A549 (cell line): ENCODE measurements at regions of chr9 and their contacts with region 1.

Region 1: DNA sequence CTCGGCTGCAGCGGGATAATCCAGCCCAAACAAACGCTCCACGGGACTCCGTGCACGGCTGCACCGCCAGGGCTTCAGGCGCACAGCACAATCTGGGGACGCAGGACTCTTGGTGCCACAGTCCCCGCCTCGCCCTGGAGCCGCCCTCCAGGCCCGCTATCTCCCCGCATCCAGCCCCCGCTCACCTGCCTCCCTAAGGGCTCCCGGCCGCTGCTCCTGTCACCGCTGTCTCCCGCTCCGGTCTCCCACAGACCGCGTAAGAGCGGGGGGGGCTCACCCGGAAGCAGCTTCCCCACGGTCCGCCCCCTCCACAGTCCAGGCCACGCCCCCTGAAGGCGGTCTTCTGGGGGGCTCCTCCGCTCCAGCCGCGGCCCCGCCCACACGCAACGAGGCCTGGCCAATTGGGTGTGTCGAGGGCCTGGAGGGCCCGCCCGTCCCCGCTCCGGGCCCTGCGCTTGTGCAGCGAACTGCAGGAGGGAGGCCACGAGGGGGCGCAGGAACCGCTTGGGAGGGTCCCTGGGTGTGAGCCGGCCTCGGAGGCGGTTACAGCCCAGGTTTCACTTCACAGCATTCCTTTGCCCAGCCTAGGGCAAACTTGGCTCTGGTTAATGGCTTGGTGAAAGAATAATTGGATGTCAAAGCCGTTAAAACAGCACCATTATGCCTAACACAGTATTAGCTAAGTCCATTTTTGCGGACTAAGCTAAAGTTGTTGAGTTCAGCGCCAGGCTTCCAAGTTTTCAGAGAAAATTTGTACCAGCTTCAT is at the start of gene ALAD:
- DNase-seq: peak; percentile 93 to 98
- ATAC-seq: peak; percentile 97 to 98
- H3K4me3 ChIP-seq: peak within 1 kb of the TSS; percentile 73
- H3K27ac ChIP-seq: peak within 1 kb of the TSS; percentile 66 to 85
- H3K4me1 ChIP-seq: peaks cover 10% of the 10 kb centered on the region; the same call in 1 of the 3 replicates
- CTCF ChIP-seq: peak; percentile 85
- EP300 ChIP-seq: no peak
- POLR2A ChIP-seq: peak; percentile 60
- RAD21 ChIP-seq: peak; percentile 49 to 66
- polyA plus RNA-seq, gene ALAD: 5.7 and 9.5 TPM in 2 replicates

Region 2: GRCh38 chr9:112867416-112867991 is 533.7 kb before region 1 on chr9:
- CTCF ChIA-PET with region 1: no interaction called
- POLR2A ChIA-PET with region 1: no interaction called
- DNase-seq: peak; percentile 41 to 80
- ATAC-seq: peak; percentile 57 to 86; a peak in 4 of 6 replicates
- H3K4me3 ChIP-seq: no peak overlapping the region
- H3K27ac ChIP-seq: peak overlapping the region; percentile 3 to 64; a peak in 2 of 6 replicates
- H3K4me1 ChIP-seq: no peaks in the 10 kb centered on the region
- CTCF ChIP-seq: no peak
- EP300 ChIP-seq: no peak
- POLR2A ChIP-seq: no peak
- RAD21 ChIP-seq: no peak

Region 3: DNA sequence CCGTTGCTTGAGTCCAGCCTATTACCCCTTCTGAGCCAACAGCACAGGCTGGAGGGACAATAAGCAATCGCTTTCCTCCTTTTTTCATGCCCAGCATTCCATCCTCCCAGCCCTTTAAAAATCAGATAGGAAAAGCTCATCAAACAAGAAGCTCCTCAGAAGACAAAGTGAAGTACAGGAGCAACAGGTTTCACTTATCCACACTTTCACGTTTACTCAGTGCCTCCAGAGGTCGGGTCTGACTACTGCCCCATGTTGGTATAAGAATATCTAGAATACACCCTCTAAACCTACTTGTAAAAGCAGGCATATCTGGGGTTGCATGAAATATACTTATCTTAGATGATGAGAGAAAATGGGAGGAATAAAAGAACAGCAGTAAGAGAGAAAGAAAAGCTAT is 204.2 kb before region 1 on chr9:
- CTCF ChIA-PET with region 1: no interaction called
- POLR2A ChIA-PET with region 1: no interaction called
- DNase-seq: no peak
- ATAC-seq: no peak
- H3K4me3 ChIP-seq: no peak overlapping the region
- H3K27ac ChIP-seq: no peak overlapping the region
- H3K4me1 ChIP-seq: no peaks in the 10 kb centered on the region
- CTCF ChIP-seq: no peak
- EP300 ChIP-seq: no peak
- POLR2A ChIP-seq: no peak
- RAD21 ChIP-seq: no peak

Region 4: DNA sequence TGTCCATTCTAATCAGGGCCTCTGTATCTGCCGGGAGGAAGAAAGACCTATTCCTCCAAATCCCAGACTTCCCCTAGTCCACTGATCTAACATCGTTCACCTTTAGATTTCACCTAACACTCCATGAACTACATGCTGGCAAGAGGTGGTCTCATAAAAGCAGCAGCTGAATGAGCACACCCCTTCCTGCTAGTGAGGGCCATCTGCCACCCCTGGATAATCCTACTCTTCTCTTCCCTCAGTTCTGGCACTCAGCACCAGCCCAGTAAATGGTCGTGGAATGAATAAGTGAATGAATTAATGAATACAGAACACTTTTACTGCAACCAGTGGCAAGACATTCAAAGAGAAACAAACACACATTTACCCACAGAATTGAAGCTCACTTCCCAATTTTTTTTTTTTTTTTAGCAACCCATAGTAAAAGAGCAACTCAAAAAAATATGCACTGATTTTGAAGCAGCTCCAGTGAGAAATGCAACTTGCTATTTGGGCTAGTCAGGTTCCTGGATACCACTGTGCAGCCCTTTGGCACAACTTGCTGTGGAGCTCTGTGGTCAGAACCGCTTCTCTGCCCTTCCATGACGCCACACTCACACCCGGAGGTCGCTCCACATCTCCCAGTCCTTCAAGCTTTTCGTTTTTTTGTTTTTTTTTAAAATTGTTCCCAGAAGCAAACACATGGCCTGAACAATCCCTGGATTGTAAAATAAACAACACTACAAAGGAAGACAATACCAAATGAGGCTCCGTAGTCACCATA is 104.2 kb before region 1 on chr9:
- CTCF ChIA-PET with region 1: interaction called, 11 read pairs
- POLR2A ChIA-PET with region 1: no interaction called
- DNase-seq: no peak
- ATAC-seq: no peak
- H3K4me3 ChIP-seq: no peak overlapping the region
- H3K27ac ChIP-seq: no peak overlapping the region
- H3K4me1 ChIP-seq: no peaks in the 10 kb centered on the region
- CTCF ChIP-seq: no peak
- EP300 ChIP-seq: no peak
- POLR2A ChIP-seq: no peak
- RAD21 ChIP-seq: no peak

Region 5: GRCh38 chr9:113309204-113309813 is 91.9 kb before region 1 on chr9:
- CTCF ChIA-PET with region 1: interaction called, 52 read pairs
- POLR2A ChIA-PET with region 1: no interaction called
- DNase-seq: peak; percentile 31 to 42
- ATAC-seq: peak; percentile 78; a peak in 4 of 6 replicates
- H3K4me3 ChIP-seq: no peak overlapping the region
- H3K27ac ChIP-seq: no peak overlapping the region
- H3K4me1 ChIP-seq: no peaks in the 10 kb centered on the region
- CTCF ChIP-seq: peak; percentile 81
- EP300 ChIP-seq: no peak
- POLR2A ChIP-seq: no peak
- RAD21 ChIP-seq: peak; percentile 74 to 83

Region 6: GRCh38 chr9:113340017-113340699 is 61.1 kb before region 1 on chr9 and contains the start of gene WDR31:
- CTCF ChIA-PET with region 1: interaction called, 14 read pairs
- POLR2A ChIA-PET with region 1: interaction called, 12 read pairs
- DNase-seq: peak; percentile 91 to 93
- ATAC-seq: peak; percentile 99
- H3K4me3 ChIP-seq: peak within 1 kb of the TSS; percentile 51
- H3K27ac ChIP-seq: peak within 1 kb of the TSS; percentile 69 to 91
- H3K4me1 ChIP-seq: 0 out of 3 replicates have a peak, but pooled peaks cover 4% of the 10 kb centered on the region
- CTCF ChIP-seq: no peak
- EP300 ChIP-seq: no peak
- POLR2A ChIP-seq: peak; percentile 68
- RAD21 ChIP-seq: peak; percentile 10 to 14; a peak in 2 of 5 replicates
- polyA plus RNA-seq, gene WDR31: 2.9 and 3.7 TPM in 2 replicates

Region 7: DNA sequence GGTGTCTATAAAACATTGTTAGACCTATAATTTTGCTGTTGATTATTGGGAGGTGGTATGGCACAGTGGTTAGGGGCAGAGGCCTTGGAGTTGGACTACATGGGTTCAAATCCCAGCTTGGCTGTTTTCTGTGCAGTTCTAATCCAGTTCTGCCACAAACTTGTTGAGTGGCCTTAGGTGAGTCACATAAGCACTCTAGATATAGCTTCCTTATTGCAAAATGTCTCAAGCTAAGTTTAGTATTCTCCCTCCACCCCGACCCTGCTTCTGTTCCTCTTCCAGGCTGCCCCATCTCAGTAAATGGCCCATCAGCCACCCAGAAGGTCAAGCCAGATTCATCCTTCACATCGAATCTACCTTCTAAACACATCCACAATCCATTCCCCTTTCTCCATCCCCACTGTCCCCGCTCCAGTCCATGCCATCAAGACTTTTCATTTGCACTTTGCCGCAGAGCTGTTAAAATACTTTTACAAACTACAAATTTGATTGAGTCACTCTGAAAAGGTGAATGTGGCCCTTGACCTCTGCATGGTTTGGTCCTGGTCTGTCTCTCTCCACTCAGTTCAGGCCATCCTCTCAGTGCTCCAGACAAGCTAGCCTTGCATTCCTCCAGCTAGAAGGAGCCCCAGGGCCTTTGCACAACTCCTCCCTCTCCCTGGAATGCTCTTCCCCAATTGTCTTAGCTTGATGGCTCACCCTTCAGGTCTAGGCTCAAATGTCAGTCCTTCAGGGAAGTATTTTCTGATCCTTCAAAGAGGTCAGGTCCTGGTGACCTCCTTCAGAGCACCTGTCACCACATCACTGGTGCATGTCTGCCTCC is 14.4 kb before region 1 on chr9:
- CTCF ChIA-PET with region 1: interaction called, 51 read pairs
- POLR2A ChIA-PET with region 1: no interaction called
- DNase-seq: no peak
- ATAC-seq: no peak
- H3K4me3 ChIP-seq: no peak overlapping the region
- H3K27ac ChIP-seq: no peak overlapping the region
- H3K4me1 ChIP-seq: 0 out of 3 replicates have a peak, but pooled peaks cover 4% of the 10 kb centered on the region
- CTCF ChIP-seq: no peak
- EP300 ChIP-seq: no peak
- POLR2A ChIP-seq: no peak
- RAD21 ChIP-seq: no peak